Sigmoid colon (tissue), 7 donors: ENCODE measurements at regions of chr3 and their contacts with region 1.

Region 1: DNA sequence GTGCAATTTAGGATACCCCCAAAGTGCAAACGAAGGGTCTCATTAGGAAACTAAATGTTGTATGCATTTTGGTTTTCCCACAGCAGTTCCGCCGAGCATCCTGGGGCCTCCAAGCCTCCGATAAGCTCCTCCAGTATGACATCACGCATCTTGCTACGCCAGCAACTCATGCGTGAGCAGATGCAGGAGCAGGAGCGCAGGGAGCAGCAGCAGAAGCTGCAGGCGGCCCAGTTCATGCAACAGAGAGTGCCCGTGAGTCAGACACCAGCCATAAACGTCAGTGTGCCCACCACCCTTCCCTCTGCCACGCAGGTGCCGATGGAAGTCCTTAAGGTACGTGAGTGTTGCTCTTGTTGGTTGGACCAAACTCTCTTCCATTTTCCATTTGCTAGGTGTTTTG is 120.5 kb upstream of the SAMMSON start:
- DNase-seq: no peak
- H3K4me3 ChIP-seq: no peak overlapping the region
- H3K27ac ChIP-seq: no peak overlapping the region
- H3K4me1 ChIP-seq: peaks cover 0 to 20% (median 0%) of the 10 kb centered on the region in 4 donors
- H3K27me3 ChIP-seq: no peaks in the 10 kb centered on the region
- CTCF ChIP-seq: no peak
- EP300 ChIP-seq: no peak
- POLR2A ChIP-seq: no peak

Region 2: DNA sequence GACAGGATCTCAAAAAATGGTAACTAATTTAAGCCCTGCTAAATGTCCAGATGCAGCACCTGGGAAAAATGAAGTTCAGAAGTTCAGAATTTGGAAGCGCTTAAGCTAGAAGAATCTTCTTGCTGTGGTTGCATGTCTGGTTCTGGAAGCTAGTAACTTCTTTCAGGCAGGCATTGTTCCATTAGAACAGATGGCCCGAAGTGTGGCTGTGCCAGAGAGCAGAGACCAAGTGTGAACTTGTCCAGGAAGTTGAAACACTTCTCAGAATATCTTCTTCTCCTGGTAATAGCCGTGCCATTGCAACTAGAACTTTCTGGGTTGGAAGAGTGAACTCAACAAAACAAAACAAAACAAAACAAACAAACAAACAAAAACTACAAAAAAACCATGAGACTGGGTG is 59.8 kb before region 1 on chr3:
- intact Hi-C with region 1: no loop called
- DNase-seq: peak; percentile 69
- H3K4me3 ChIP-seq: no peak overlapping the region
- H3K27ac ChIP-seq: no peak overlapping the region
- H3K4me1 ChIP-seq: peaks cover 0 to 75% (median 59%) of the 10 kb centered on the region in 4 donors
- H3K27me3 ChIP-seq: no peaks in the 10 kb centered on the region
- CTCF ChIP-seq: no peak
- EP300 ChIP-seq: no peak
- POLR2A ChIP-seq: no peak

Region 3: DNA sequence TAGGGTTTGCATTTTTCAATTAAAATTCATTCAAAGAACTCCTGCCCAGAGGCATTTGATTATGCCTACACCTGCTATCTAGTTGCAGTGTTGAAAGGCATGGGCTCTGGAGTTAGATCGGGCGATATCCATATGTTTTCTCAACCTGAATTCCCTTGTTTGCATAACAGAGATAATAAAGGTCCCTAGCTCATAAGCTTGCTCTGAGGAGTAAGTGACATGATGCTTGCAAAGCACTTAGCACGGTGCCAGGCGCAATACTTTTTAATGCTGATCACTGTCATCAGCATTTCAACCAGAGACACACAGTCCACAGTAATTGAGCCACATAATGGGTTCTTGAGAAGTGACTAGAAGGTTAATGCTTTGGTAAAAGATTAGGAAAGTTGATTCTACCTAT is 14.2 kb after region 1 on chr3:
- intact Hi-C with region 1: loop called (anchors 2 kb)
- DNase-seq: no peak
- H3K4me3 ChIP-seq: no peak overlapping the region
- H3K27ac ChIP-seq: no peak overlapping the region
- H3K4me1 ChIP-seq: peaks cover 0 to 44% (median 28%) of the 10 kb centered on the region in 4 donors
- H3K27me3 ChIP-seq: no peaks in the 10 kb centered on the region
- CTCF ChIP-seq: no peak
- EP300 ChIP-seq: no peak
- POLR2A ChIP-seq: no peak